ENCODE measurements at regions of chr3 and their contacts with region 1.

Region 1: DNA sequence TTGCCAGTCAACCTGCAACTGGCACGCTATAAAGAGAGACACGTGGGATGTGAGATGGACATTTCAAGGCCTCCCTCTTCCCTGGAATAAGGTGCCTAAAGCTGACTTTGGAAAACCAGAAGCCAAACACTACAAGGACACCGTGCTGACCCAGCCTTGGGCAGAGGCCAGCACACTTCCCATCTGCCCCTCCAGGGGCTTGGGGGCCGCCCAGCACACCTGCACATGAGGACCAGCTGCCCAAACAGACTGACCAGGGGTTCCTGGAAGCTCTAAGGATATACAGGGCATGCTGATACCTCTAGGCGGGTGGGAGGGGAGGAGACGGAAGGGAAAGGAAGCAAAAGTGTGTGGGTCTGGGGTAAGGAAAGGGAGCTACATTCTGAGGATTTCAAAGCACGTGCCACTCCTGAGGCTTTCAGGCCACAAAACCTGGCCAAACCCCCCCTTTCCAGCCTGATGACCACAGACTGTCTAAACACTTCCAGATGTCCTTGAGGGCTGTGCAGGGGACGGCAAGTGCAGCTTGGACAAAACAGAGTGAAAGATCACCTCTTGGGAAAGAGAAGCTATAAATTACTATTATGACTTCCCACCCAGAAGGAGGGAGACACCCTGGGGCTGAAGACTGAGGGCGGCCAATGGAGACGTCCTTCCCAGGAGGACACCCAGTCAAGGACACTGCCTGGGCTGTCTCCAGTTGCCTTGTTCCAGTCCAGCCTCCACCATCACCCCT is 57.9 kb downstream of the ADCY5 start:
- DNase-seq: no peak

Region 2: GRCh38 chr3:123431658-123432324 is 40.8 kb after region 1 on chr3:
- intact Hi-C with region 1: loop called in 1 of 2 experiments (anchors 1 kb)
- DNase-seq: no peak